Left colon (tissue), 2 donors: ENCODE measurements at regions of chr14 and their contacts with region 1.

Region 1: GRCh38 chr14:70027785-70028428 is 148.7 kb downstream of the SMOC1 start:
- DNase-seq: peak in 1 of 2 donors; percentile 72
- ATAC-seq: peak; percentile 69

Region 2: GRCh38 chr14:69673578-69674305 is 354.2 kb before region 1 on chr14:
- intact Hi-C with region 1: no loop called
- DNase-seq: peak in 1 of 2 donors; percentile 30
- ATAC-seq: peak; percentile 82

Region 3: GRCh38 chr14:69818757-69819191 is 209.1 kb before region 1 on chr14:
- intact Hi-C with region 1: loop called (anchors 2 to 10 kb)
- DNase-seq: peak in 1 of 2 donors; percentile 26
- ATAC-seq: peak; percentile 76

Region 4: DNA sequence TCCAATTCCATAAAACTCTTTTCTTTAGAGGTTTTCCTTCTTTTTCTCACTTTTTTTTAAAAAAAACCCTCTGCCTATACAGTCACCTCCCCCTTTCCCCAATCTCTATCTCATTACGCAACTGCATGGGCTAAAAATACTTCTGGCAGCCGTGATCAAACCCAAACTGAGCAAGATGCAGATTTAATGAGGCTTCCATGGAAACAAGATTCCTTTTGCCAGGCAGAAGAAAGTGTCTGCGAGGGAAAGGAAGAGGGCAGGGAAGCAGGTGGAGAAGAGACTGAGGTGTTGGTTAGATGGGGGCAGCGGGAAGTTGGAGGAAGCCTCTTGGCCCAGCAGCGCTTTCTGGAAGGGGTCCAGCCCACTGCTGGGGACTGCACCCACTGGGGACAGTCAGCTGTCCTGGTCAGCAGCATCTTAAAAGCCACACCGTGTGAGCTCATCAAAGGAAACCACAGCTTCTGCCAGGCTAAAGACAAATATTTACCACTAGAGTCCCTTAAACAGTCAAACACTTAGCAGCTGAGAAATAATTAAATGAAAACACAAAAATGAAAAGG is 70.4 kb after region 1 on chr14:
- intact Hi-C with region 1: no loop called
- DNase-seq: no peak
- ATAC-seq: no peak